ENCODE measurements at regions of chr16 and their contacts with region 1.

Region 1: GRCh38 chr16:86563489-86564345 is 2.9 kb upstream of the FOXC2 start:
- DNase-seq: peak; percentile 92
- ATAC-seq: peak; percentile 92
- H3K4me3 ChIP-seq: peak overlapping the region; percentile 40 to 43
- H3K27ac ChIP-seq: no peak overlapping the region
- H3K4me1 ChIP-seq: peaks cover 9 to 14% of the 10 kb centered on the region in 2 experiments
- H3K27me3 ChIP-seq: no peaks in the 10 kb centered on the region
- CTCF ChIP-seq: peak; percentile 100
- POLR2A ChIP-seq: no peak
- RAD21 ChIP-seq: peak; percentile 100

Region 2: GRCh38 chr16:86761111-86762031 is 197.7 kb after region 1 on chr16:
- CTCF ChIA-PET with region 1: no interaction called
- POLR2A ChIA-PET with region 1: no interaction called
- RAD21 ChIA-PET with region 1: no interaction called
- intact Hi-C with region 1: loop called (anchors 5 kb)
- DNase-seq: peak; percentile 51
- ATAC-seq: peak; percentile 92
- H3K4me3 ChIP-seq: no peak overlapping the region
- H3K27ac ChIP-seq: no peak overlapping the region
- H3K4me1 ChIP-seq: peaks cover 0 to 4% of the 10 kb centered on the region in 2 experiments; a peak in 3 of 4 replicates
- H3K27me3 ChIP-seq: peaks cover 37% of the 10 kb centered on the region
- CTCF ChIP-seq: peak; percentile 79 to 99 (median 97)
- POLR2A ChIP-seq: no peak
- RAD21 ChIP-seq: peak; percentile 77

Region 3: DNA sequence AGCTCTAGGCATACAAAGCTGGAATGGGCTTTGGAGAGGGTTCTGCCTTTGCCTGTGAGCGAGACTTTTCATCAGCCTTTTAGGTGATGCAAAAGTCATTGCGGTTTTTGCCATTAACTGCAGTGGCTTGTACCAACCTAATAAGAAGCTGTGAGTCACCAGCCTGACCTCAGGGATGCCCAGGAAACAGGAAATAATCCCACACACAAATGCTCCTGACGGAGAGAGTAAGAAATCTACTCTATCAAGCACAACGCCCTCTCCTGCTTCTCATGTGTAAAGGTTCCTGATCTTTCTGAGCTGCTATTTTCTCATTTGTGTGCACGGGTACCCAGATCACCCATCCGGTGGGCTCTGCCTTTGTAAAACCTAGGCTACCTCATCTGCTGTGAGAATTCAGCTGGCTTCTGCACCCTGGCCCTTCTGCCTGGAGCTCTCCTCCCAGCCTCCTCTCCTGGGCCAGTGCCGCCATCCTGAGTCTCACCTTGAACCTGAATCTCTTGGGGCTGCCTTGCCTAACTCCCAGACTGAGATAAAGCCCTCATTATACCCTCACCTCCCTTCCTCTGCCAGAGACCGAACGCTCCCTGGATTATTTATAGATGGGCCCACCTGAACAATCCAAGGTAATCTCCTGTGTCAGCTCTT is 453.8 kb after region 1 on chr16:
- CTCF ChIA-PET with region 1: interaction called, 16 read pairs
- POLR2A ChIA-PET with region 1: no interaction called
- RAD21 ChIA-PET with region 1: interaction called in 1 of 2 experiments, 9 read pairs
- intact Hi-C with region 1: loop called (anchors 1 kb)
- DNase-seq: peak; percentile 80
- ATAC-seq: peak; percentile 92
- H3K4me3 ChIP-seq: no peak overlapping the region
- H3K27ac ChIP-seq: no peak overlapping the region
- H3K4me1 ChIP-seq: peaks cover 3 to 10% of the 10 kb centered on the region in 2 experiments; a peak in 3 of 4 replicates
- H3K27me3 ChIP-seq: no peaks in the 10 kb centered on the region
- CTCF ChIP-seq: peak; percentile 39 to 58 (median 57)
- POLR2A ChIP-seq: no peak
- RAD21 ChIP-seq: peak; percentile 63

Region 4: DNA sequence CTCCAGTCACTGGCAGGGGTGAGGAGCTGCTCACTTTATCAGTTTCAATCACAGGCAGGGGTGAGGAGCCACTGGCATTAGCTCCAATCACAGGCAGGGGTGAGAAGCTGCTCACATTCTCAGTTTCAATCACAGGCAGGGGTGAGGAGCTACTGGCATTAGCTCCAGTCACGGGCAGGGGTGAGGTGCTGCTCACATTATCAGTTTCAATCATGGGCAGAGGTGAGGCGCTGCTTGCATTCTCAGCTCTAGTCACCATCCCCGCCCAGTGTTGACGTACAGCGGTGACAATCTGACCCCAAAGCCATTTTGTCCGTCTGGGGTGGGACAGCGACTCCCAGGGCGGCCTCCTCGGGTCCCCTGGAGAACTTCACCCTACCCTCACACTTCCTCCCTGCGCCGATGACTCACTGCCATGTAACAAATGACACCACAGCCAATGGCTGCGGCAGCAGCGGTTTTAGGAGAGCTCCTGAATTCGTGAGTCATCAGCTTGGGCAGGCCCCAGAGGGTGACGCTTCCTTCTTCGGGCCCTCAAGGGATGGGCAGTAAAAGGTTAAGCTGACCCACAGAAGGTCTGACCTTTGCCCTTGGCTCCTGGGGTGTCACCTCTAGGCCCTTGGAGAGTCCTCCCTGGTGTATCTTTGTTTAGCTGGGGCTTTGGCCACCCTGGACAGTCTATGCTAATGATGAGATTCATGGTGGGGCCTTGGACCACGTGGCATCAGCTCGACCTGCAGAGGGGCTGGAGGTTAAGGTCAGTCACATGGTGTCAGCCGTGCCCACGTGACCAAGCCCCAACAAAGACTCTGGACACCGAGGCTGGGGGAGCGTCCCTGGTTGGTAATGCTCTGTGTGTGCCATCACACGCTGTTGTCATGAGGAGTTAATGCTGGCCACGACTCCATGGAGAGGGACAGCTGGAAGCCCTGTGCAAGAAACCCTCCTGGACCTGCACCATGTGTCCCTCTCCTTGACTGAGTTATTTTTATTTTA is 581.8 kb after region 1 on chr16:
- CTCF ChIA-PET with region 1: interaction called, 12 read pairs
- POLR2A ChIA-PET with region 1: no interaction called
- RAD21 ChIA-PET with region 1: no interaction called
- intact Hi-C with region 1: no loop called
- DNase-seq: peak; percentile 97
- ATAC-seq: peak; percentile 94
- H3K4me3 ChIP-seq: peak overlapping the region; percentile 24 to 40
- H3K27ac ChIP-seq: peak overlapping the region; percentile 41
- H3K4me1 ChIP-seq: peaks cover 13 to 34% of the 10 kb centered on the region in 2 experiments
- H3K27me3 ChIP-seq: no peaks in the 10 kb centered on the region
- CTCF ChIP-seq: peak in 2 of 3 experiments; percentile 43 to 48; a peak in 5 of 6 replicates
- POLR2A ChIP-seq: peak; percentile 41
- RAD21 ChIP-seq: peak; percentile 40

Region 5: DNA sequence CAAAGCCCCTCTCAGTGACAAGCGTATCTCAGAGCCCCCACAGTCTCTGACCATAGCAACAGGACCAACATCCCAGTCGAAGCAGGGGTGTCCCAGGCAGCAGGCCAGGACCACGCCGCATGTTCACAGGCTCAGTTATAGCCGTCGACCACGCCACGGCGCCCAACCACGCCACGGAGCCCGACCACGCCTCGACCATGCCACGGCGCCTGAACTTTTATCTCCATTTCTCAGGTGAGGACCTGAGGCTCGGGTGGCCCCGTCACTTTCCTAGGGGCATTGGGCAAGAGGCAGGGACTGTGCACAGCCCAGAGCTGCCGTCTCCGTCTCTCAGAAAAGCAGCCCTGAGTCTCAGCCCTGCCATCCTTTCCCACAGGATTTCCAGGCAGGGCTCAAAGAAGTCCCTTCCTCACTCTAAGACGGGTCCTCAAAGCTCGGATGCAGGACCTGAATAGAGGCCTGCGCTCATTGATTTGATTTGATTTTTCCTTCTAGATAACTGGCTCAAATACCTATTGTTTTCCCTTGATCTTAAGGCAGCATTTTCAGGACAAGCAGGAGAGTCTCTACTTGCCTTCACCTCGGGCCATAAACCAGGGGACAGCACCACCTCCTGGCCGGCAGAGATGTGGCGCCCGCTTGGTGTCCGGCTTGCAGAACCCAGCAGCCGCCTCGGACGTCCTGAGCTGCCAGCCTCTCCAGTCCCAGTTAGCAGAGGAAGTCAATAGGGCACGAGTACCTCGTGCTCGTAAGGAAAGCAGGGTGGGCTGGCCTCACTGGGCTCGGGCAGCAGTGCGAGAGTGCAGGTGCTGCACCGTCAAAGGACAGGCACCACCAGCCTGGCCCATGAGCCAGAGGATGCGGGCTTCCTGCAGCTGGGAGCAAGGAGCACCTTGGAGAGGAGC is 714.7 kb after region 1 on chr16:
- CTCF ChIA-PET with region 1: interaction called, 23 read pairs
- POLR2A ChIA-PET with region 1: no interaction called
- RAD21 ChIA-PET with region 1: no interaction called
- intact Hi-C with region 1: loop called (anchors 1 kb)
- DNase-seq: peak; percentile 52
- ATAC-seq: peak; percentile 99
- H3K4me3 ChIP-seq: no peak overlapping the region
- H3K27ac ChIP-seq: no peak overlapping the region
- H3K4me1 ChIP-seq: peaks cover 0 to 8% of the 10 kb centered on the region in 2 experiments; a peak in 1 of 4 replicates
- H3K27me3 ChIP-seq: no peaks in the 10 kb centered on the region
- CTCF ChIP-seq: peak; percentile 97 to 99 (median 97)
- POLR2A ChIP-seq: no peak
- RAD21 ChIP-seq: peak; percentile 99

Measured in HCT116 (cell line).